ENCODE measurements at regions of chr22 and their contacts with region 1.

Region 1: DNA sequence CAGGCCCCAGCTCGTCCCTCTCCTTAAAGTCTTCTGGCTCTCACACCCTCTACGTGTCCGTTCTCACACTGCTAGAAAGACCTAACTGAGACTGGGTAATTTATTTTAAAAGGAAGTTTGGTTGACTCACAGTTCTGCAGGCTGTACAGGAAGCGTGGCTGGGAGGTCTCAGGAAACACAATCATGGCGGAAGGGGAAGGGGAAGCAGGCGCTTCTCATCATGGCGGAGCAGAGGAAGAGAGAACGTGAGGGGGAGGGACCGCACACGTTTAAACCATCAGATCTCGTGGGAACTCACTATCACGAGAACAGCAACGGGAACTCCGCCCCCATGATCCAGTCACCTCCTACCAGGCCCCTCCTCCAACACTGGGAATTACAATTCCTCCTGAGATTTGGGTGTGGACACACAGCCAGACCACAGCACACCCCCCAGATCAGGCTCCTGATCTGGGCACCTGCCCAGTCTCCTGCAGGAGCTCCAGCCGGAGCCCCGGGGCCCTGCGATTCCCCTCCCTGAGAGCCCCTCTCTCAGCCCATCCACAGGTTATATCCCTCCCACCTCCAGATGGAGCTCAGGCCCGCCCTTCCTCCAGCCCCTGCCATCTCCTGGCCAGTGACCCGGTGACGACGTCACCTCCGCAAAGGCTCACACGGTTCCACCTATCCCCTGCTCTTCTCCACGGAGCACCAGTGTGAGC is 170.2 kb downstream of the BRD1 start:
- DNase-seq: peak; percentile 42 to 91 (median 68)
- ATAC-seq: peak; percentile 87
- H3K4me3 ChIP-seq: peak overlapping the region; percentile 76
- H3K4me3 Mint-ChIP-seq: peak overlapping the region; percentile 95
- H3K27ac ChIP-seq: peak overlapping the region; percentile 34 to 60
- H3K27ac Mint-ChIP-seq: peak overlapping the region; percentile 81
- H3K4me1 ChIP-seq: peaks cover 32% of the 10 kb centered on the region
- H3K4me1 Mint-ChIP-seq: peaks cover 32% of the 10 kb centered on the region
- H3K27me3 ChIP-seq: no peaks in the 10 kb centered on the region
- H3K27me3 Mint-ChIP-seq: no peaks in the 10 kb centered on the region
- CTCF ChIP-seq: no peak

Region 2: DNA sequence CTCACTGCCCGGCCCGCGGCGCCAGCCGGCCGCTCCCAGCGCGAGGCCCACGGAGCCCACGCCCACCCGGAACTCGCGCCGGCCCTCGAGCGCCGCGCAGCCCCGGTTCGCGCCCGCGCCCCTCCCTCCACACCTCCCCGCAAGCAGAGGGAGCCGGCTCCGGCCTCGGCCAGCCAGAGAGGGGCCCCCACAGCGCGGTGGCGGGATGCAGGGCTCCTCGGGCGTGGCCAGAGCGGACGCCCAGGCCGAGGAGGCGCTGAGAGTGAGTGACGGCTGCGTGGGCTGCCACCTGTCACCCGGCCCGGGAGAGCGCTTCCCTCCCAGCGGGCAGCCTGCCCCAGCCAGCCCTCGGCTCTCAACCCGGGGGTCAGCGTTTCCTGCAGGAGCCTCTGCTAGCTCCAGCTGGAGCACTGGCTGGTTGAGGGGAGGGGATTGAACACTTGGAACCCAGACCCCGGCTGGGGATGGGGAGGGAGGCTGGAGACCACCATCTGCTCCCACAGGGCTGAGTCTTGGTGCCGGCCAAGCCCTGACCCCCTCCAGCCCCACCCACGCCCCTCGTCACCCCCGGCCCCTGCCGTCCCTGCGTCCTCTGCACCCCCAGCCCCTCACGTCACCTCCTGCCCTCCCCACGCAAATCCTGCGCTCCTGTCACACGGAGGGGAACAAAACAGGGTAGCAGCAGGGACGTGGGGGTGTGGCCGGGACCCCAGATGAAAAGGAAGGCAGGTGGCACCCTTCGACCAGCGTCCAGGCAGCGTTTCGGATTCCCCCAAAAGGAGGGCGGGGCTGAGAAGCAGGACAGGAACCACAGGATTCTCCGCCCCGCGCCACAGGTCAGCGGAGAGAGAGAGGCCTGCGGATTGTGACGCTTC is 13.3 kb after region 1 on chr22:
- CTCF ChIA-PET with region 1: no interaction called
- POLR2A ChIA-PET with region 1: interaction called, 10 read pairs
- intact Hi-C with region 1: no loop called
- DNase-seq: peak in 5 of 14 experiments; percentile 9 to 49 (median 35)
- ATAC-seq: peak; percentile 43
- H3K4me3 ChIP-seq: peak overlapping the region; percentile 44
- H3K4me3 Mint-ChIP-seq: peak overlapping the region; percentile 84
- H3K27ac ChIP-seq: no peak overlapping the region
- H3K27ac Mint-ChIP-seq: no peak overlapping the region
- H3K4me1 ChIP-seq: peaks cover 37% of the 10 kb centered on the region
- H3K4me1 Mint-ChIP-seq: peaks cover 33% of the 10 kb centered on the region
- H3K27me3 ChIP-seq: peaks cover 17 to 28% of the 10 kb centered on the region in 2 experiments
- H3K27me3 Mint-ChIP-seq: peaks cover 33% of the 10 kb centered on the region
- CTCF ChIP-seq: no peak